ENCODE measurements at regions of chr9 and their contacts with region 1.

Region 1: GRCh38 chr9:2241836-2242741 is 226.9 kb downstream of the SMARCA2 start:
- DNase-seq: peak; percentile 52
- ATAC-seq: peak; percentile 94
- H3K4me3 Mint-ChIP-seq: peak overlapping the region; percentile 74
- H3K27ac Mint-ChIP-seq: no peak overlapping the region
- H3K4me1 Mint-ChIP-seq: peaks cover 20% of the 10 kb centered on the region
- H3K27me3 Mint-ChIP-seq: peaks cover 29% of the 10 kb centered on the region
- CTCF ChIP-seq: no peak

Region 2: DNA sequence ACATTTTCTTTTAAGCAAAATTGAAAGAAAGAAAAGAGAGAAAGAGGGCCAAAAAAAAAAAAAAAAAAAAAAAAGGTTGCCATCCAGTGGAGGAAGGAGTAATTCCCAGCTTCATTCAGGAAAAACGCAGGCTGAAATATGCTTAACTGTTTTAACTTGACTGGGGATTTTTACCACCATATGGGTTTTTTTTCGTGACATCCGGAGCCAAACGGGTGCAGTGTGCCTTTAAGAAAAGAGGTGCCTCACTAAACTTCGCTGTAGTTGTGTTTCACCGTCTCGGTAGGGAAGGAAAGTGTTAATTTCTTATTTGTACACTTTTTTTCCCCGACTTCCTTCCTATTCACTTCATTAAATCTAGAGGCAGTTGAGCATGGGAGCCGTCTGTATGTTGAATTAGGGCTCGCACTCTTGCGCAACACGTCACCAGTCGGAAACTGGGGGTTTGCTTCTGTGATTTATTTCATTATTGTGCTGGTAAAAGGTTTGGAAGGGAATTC is 83.9 kb before region 1 on chr9:
- CTCF ChIA-PET with region 1: no interaction called
- POLR2A ChIA-PET with region 1: no interaction called
- intact Hi-C with region 1: loop called (anchors 1 kb)
- DNase-seq: no peak
- ATAC-seq: peak; percentile 73
- H3K4me3 Mint-ChIP-seq: peak overlapping the region; percentile 89
- H3K27ac Mint-ChIP-seq: peak overlapping the region; percentile 87
- H3K4me1 Mint-ChIP-seq: peaks cover 62% of the 10 kb centered on the region
- H3K27me3 Mint-ChIP-seq: no peaks in the 10 kb centered on the region
- CTCF ChIP-seq: no peak

Region 3: DNA sequence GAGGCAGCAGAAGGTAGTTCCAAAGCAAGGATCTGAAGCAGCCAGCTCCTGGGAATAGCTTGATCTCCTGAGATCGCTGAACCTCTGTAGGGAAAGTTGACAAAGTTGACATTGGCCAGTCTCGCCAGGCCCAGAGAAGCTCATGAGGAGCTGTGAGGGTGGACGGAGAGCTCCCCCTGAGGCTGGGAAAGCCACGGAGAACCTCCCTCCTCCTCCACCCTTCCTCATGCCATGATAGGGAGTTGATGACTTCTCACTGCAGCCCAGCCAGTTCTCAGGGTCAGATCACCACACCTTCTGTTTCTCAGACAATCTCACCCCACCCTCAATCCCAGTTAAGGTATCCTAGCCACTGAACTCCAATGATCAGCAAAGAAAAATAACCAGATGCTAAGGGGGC is 444.8 kb after region 1 on chr9:
- CTCF ChIA-PET with region 1: no interaction called
- POLR2A ChIA-PET with region 1: no interaction called
- intact Hi-C with region 1: no loop called
- DNase-seq: no peak
- ATAC-seq: no peak
- H3K4me3 Mint-ChIP-seq: no peak overlapping the region
- H3K27ac Mint-ChIP-seq: no peak overlapping the region
- H3K4me1 Mint-ChIP-seq: no peaks in the 10 kb centered on the region
- H3K27me3 Mint-ChIP-seq: no peaks in the 10 kb centered on the region
- CTCF ChIP-seq: no peak